OCI-LY7 (cell line): ENCODE measurements at regions of chr5 and their contacts with region 1.

Region 1: DNA sequence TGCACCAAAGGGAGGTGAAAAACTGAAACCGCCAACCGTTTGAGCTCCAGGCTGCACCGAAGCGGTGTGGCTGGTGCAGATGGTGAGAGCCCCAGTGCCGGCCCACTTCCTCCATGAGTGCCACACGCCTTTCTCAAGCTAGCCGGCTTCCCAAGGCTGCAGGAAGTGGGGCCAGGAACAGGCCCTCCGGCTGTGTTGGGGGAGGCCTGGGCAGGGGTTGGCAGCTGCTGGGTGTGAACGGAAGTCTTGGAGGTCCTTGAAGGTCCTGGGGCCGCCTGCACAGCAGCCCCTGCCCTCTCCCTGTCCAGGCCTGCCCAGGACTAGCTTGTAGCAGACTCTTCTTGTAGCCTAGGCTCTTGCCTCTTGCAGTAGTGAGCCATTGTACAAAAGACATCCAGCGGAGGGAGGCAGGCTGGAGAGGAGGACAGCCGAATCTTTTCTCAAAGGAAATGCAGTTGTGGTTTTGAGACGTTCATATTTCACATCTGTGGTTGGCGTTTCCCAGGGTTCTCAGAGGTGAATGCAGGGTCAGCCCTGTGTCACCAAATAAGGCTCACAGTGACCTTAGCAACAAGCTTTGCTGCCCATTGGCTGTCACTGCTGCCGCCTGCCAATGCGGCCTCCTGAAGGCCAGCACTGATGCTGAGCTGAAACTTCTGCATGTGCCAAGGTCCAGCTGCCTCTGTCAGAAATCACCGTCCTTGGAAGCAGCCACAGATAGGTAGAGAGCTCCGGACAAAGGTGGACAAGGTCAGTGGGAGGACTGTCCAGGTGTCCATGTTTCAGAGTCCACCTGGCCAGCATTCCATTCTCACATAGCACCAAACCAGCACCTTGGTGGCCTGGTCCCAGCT is 23.9 kb downstream of the IRF1 start:
- DNase-seq: peak; percentile 84
- H3K4me3 ChIP-seq: peak overlapping the region; percentile 48
- H3K27ac ChIP-seq: peak overlapping the region; percentile 61
- H3K4me1 ChIP-seq: peaks cover 68% of the 10 kb centered on the region
- CTCF ChIP-seq: no peak

Region 2: DNA sequence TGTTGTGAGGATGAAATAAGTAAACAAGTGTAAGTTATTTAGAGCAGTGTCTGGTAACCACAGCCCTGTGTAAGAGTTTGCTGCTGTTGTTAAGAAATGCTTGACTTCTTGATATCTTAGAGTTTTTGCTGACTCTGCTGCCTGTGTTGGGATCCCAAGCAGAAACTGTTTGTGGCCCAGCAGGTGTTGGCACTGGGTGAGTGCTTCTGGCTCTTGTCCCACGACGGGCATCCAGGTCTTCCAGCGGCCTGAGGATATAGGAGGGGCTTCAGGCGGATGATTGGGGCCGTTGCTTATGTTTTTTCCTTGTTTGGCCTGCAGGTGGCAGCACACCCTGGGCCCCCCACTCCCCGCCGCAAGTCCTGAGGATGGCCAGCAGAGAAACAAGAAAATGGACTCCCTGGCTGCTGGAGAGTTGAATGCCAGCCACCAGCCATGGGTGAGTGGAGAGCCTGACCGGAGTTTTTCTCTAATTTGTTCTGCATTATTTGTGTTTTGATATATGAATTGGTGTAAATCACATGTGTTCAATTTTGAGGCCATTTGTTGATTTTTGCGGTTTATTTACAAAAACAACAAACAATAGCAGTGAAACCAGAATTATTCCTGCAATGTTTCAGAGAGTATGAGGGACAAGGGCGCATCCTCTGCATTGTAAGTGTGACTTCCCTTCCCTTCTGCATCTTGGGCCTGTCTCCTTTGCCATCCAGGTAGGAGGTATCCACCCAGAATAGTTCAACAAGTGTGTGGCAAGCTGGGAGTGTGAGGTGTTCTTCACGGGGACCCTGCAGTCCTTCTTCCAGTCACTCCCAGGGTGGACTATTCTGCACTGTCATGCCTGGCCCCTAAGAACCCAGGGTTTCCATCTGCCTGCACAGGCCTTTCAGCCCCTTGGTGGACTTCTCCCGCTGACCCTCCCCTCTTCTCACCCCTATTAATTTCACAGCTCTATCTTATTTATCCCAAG is 46.9 kb before region 1 on chr5:
- CTCF ChIA-PET with region 1: interaction called, 9 read pairs
- POLR2A ChIA-PET with region 1: interaction called, 49 read pairs
- intact Hi-C with region 1: loop called (anchors 1 kb)
- DNase-seq: peak; percentile 82
- H3K4me3 ChIP-seq: peak overlapping the region; percentile 62
- H3K27ac ChIP-seq: peak overlapping the region; percentile 96
- H3K4me1 ChIP-seq: peaks cover 84% of the 10 kb centered on the region
- CTCF ChIP-seq: peak; percentile 95

Region 3: GRCh38 chr5:132426525-132427138 is 40.0 kb before region 1 on chr5:
- CTCF ChIA-PET with region 1: interaction called, 10 read pairs
- POLR2A ChIA-PET with region 1: interaction called, 49 read pairs
- intact Hi-C with region 1: loop called (anchors 1 kb)
- DNase-seq: peak; percentile 87
- H3K4me3 ChIP-seq: peak overlapping the region; percentile 37
- H3K27ac ChIP-seq: peak overlapping the region; percentile 96
- H3K4me1 ChIP-seq: peaks cover 100% of the 10 kb centered on the region
- CTCF ChIP-seq: peak; percentile 66